ENCODE measurements at regions of chr2 and their contacts with region 1.

Region 1: GRCh38 chr2:172465417-172466334 is 38.3 kb downstream of the ITGA6 start:
- DNase-seq: peak; percentile 56
- H3K4me3 ChIP-seq: peak overlapping the region; percentile 52
- CTCF ChIP-seq: peak; percentile 73

Region 2: GRCh38 chr2:172102391-172103278 is 363.0 kb before region 1 on chr2 and contains the start of gene DLX2:
- CTCF ChIA-PET with region 1: interaction called, 23 read pairs
- POLR2A ChIA-PET with region 1: no interaction called
- DNase-seq: no peak
- H3K4me3 ChIP-seq: peak within 1 kb of the TSS; percentile 81
- CTCF ChIP-seq: no peak

Region 3: DNA sequence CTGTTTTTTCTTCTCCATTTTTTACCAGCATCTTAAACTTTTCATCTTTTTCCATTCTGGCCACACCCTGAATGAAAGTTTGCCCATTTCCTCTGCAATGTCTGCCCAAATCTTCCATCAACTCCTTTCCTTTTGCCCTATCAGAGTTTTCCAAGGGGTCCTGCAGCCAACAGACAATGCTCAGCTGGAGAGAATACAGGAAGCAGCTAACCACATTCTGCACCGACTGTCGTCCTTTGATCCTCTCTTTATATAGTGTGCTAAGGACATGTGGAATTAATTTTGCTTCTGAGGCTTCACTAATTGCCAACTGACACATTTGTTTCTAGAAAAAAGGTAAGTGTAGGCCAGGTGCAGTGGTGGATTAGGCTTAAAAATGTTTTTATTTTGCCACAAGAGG is 312.5 kb before region 1 on chr2:
- CTCF ChIA-PET with region 1: interaction called, 10 read pairs
- POLR2A ChIA-PET with region 1: no interaction called
- DNase-seq: no peak
- H3K4me3 ChIP-seq: no peak overlapping the region
- CTCF ChIP-seq: no peak

Region 4: GRCh38 chr2:172220121-172220520 is 245.6 kb before region 1 on chr2:
- CTCF ChIA-PET with region 1: interaction called, 11 read pairs
- POLR2A ChIA-PET with region 1: no interaction called
- DNase-seq: no peak
- H3K4me3 ChIP-seq: no peak overlapping the region
- CTCF ChIP-seq: no peak

Region 5: DNA sequence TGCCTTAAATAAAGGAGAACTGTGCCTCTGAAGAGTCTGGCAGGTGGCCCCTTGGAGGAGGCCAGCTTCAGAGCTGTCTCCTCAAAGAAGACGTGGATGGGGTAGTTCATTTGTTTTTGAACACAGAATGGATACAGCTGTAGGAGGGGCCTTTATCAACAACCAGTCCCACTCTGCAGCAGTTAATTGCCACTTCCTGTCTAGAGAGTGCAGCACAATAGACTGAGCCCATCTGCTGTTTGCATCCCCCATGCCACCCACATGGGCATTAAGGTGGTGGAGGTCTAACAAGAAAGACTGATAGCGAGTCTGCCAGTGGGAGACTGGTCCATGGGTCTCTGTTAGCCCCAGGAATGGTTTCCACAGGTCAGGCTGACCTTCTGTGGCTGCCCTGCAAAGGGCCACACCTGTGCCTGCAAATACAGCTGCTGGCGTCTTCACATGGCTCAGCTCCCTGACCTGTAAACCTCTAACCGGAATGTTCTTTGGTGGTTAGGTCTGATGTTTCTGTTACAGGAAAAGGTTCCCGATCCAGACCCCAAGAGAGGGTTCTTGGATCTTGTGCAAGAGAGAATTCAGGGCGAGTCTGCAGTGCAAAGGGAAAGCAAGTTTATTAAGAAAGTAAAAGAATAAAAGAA is 191.6 kb before region 1 on chr2:
- CTCF ChIA-PET with region 1: interaction called, 11 read pairs
- POLR2A ChIA-PET with region 1: no interaction called
- DNase-seq: no peak
- H3K4me3 ChIP-seq: no peak overlapping the region
- CTCF ChIP-seq: no peak

Region 6: DNA sequence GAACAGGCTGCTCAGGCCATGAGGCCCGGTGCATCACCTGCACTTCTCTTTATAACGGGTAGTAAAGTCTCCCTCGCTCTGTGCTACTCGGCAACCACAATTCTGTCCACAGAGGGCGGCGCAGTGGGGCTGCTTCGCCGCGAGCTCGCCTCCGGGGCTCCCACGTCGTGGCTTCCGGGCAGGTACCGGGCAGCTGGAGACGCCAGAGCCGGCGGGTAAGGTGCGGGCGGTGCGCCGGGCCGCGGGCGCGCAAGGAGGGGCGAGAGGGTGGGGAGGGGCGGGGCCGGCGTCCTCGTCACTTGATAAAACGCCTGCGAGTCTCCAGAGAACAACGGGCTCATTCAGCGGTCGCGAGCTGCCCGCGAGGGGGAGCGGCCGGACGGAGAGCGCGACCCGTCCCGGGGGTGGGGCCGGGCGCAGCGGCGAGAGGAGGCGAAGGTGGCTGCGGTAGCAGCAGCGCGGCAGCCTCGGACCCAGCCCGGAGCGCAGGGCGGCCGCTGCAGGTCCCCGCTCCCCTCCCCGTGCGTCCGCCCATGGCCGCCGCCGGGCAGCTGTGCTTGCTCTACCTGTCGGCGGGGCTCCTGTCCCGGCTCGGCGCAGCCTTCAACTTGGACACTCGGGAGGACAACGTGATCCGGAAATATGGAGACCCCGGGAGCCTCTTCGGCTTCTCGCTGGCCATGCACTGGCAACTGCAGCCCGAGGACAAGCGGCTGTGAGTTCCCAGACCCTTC is 38.3 kb before region 1 on chr2 and contains the start of gene ITGA6:
- CTCF ChIA-PET with region 1: interaction called, 51 read pairs
- POLR2A ChIA-PET with region 1: no interaction called
- DNase-seq: no peak
- H3K4me3 ChIP-seq: peak within 1 kb of the TSS; percentile 71
- CTCF ChIP-seq: peak; percentile 14

Measured in AG04449 (cell line).